RWPE1 (cell line): ENCODE measurements at regions of chr5 and their contacts with region 1.

Region 1: GRCh38 chr5:84113246-84114105 is 271.2 kb downstream of the EDIL3 start:
- DNase-seq: no peak
- H3K27ac ChIP-seq: no peak overlapping the region
- CTCF ChIP-seq: no peak

Region 2: DNA sequence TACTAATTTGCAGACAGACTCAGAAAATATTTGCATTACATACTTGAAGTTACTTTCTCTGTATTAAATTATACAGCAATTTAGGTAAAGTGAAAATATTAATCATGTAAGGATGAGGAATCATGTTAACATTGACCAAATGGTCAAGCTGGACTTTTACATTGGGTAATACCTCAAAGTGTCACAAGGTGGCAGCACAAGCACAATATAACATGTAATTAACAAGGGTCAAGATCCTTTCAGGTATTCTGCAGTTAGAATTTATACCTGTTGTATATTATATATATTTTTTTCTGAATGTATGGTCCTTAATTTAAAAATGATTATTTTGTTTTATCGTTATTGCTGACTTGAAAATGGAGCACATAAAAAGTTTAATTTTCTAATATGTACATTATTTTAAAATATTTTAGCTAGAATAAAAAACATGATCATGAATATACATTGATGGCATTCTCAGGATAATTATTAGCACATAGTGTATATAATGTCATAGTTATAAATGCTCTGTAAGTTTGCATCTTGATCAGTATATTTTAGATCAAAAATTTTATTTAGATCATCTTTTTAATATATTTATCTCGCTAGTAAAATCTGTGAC is 401.4 kb before region 1 on chr5:
- CTCF ChIA-PET with region 1: no interaction called
- POLR2A ChIA-PET with region 1: interaction called, 12 read pairs
- DNase-seq: peak; percentile 49
- H3K27ac ChIP-seq: no peak overlapping the region
- CTCF ChIP-seq: peak; percentile 87

Region 3: DNA sequence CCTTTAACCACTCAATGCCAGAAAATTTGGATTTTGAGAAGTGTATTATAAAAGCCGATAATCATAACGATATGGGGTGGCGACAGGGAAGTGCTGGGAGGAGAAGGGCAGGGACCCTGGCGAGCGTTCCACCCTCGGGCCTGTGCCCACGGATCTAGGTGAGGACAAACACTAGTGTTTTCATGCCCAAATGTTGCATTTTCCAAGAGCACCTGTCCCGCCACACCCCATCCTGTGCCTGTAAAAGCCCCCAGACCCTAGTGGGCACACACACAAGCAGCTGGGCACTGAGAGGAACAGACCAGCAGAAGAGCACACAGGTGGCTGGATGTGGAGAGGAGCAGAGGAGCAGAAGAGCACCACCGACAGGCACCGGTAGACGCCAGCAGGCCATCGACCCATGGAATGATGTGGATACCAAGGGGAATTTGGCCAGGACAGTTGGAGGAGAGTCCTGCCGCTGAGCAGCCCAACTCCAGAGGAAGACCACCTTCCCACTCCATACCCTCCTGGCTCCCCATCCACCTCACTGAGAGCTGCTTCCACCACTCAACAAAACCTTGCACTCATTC is 43.8 kb before region 1 on chr5:
- CTCF ChIA-PET with region 1: no interaction called
- POLR2A ChIA-PET with region 1: no interaction called
- DNase-seq: no peak
- H3K27ac ChIP-seq: no peak overlapping the region
- CTCF ChIP-seq: no peak

Region 4: GRCh38 chr5:84125216-84125615 is 11.7 kb after region 1 on chr5:
- CTCF ChIA-PET with region 1: no interaction called
- POLR2A ChIA-PET with region 1: no interaction called
- DNase-seq: no peak
- H3K27ac ChIP-seq: no peak overlapping the region
- CTCF ChIP-seq: no peak

Region 5: GRCh38 chr5:84149094-84149493 is 35.6 kb after region 1 on chr5:
- CTCF ChIA-PET with region 1: no interaction called
- POLR2A ChIA-PET with region 1: no interaction called
- DNase-seq: no peak
- H3K27ac ChIP-seq: no peak overlapping the region
- CTCF ChIP-seq: no peak